ENCODE measurements at regions of chr2 and their contacts with region 1.

Region 1: DNA sequence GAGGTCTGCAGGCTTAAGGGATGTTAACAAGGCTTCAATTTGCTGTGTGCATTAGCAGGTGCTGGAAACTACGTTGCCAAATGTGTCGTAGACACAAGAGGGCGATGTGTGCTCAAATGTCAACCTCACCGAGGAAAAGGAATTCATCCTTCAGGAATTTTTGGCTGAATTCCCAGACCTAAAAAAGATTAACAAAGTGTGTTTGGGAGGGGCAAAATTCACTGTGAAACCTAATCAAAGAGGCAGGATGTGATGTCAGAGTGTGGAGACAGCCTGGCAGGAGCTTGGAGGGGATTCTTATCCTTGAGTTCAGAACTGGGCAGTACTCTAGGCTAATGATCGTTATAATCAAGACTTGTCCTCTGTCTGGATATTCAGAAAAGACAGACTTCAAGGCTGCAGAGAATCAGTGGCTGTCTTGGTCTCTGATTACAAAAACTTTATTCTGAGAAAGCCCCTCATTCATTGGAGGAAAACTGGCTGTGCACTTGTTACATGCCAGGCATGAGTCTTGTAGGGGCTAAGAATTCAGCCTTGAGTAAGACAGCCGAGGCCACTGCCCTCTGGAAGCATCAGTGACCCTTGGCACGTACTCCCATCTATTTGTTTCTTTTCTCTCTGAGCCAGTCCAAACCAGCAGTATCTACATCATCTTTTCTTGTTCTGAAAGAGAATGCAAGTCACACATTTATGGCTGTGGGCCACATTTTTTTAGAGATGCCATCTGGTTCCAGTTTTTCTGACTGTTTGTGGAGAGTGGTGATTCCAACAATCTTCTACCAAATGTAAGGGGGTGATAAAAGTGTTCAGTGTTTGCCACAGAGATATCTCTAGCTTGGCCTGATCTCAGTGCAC is 18.7 kb upstream of the SCYGR1 start:
- DNase-seq: peak; percentile 20 to 73
- ATAC-seq: peak; percentile 86 to 94 (median 90)
- H3K4me3 ChIP-seq: no peak overlapping the region
- H3K27ac ChIP-seq: peak overlapping the region; percentile 29 to 84 (median 66)
- H3K4me1 ChIP-seq: peaks cover 4 to 48% (median 14%) of the 10 kb centered on the region in 9 donors
- H3K27me3 ChIP-seq: no peaks in the 10 kb centered on the region
- CTCF ChIP-seq: peak; percentile 31 to 85 (median 73)

Region 2: GRCh38 chr2:227460070-227460485 is 53.7 kb after region 1 on chr2:
- intact Hi-C with region 1: loop called in 1 of 10 experiments (anchors 10 kb)
- DNase-seq: no peak
- ATAC-seq: no peak
- H3K4me3 ChIP-seq: no peak overlapping the region
- H3K27ac ChIP-seq: no peak overlapping the region
- H3K4me1 ChIP-seq: peaks cover 0 to 23% (median 0%) of the 10 kb centered on the region in 9 donors
- H3K27me3 ChIP-seq: peaks cover 0 to 5% (median 0%) of the 10 kb centered on the region in 7 donors
- CTCF ChIP-seq: no peak

Region 3: GRCh38 chr2:227655454-227655853 is 249.1 kb after region 1 on chr2:
- intact Hi-C with region 1: loop called in 3 of 10 experiments (anchors 5 to 10 kb)
- DNase-seq: no peak
- ATAC-seq: peak in 4 of 8 donors; percentile 24 to 93 (median 65)
- H3K4me3 ChIP-seq: no peak overlapping the region
- H3K27ac ChIP-seq: peak overlapping the region in 1 of 10 donors; percentile 71
- H3K4me1 ChIP-seq: peaks cover 0 to 27% (median 0%) of the 10 kb centered on the region in 9 donors
- H3K27me3 ChIP-seq: peaks cover 0 to 4% (median 0%) of the 10 kb centered on the region in 7 donors
- CTCF ChIP-seq: no peak

Region 4: DNA sequence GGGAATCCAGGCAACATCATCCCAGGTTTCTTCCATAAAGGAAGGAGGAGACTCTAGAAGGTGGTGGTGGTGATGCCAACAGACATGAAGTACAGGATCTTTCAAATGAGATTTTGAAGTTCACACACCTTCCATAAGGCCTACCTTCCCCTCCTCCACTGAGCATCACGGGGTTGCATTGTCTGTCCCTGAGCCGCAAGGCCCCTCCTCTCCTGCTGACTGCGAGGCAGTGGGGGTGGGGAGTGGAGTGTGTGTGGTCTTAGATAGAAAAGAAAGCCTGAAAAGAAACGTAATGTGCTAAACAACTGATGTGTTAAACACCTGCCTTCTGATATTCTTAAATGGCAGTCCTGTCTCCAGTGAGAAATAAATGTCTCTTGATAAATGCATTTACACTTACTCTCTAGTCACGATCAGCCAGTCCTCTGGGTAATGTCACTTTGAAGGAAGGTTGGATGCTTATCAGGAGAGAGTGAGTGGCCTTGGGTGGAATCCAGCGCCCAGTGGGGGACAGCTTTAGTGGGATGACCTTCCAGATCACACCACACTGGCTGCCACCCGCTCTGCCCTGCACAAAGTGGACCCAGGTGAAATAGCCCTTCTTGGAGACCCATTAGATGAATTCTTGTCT is 254.7 kb after region 1 on chr2:
- intact Hi-C with region 1: loop called in 3 of 10 experiments (anchors 5 to 10 kb)
- DNase-seq: peak in 1 of 2 donors; percentile 21
- ATAC-seq: peak in 1 of 8 donors; percentile 47
- H3K4me3 ChIP-seq: no peak overlapping the region
- H3K27ac ChIP-seq: no peak overlapping the region
- H3K4me1 ChIP-seq: peaks cover 0 to 15% (median 0%) of the 10 kb centered on the region in 9 donors
- H3K27me3 ChIP-seq: peaks cover 0 to 4% (median 0%) of the 10 kb centered on the region in 7 donors
- CTCF ChIP-seq: no peak

Measured in heart right ventricle (tissue), 16 donors.